Activated CD8-positive, alpha-beta T cell treated with anti-CD3 and anti-CD28 coated beads for 36 hours (primary cell): ENCODE measurements at regions of chr6 and their contacts with region 1.

Region 1: GRCh38 chr6:11366183-11366933 is 133.9 kb upstream of the NEDD9 start:
- DNase-seq: peak; percentile 77
- ATAC-seq: peak; percentile 74
- H3K4me3 Mint-ChIP-seq: peak overlapping the region; percentile 39
- H3K27ac Mint-ChIP-seq: peak overlapping the region; percentile 86
- H3K4me1 Mint-ChIP-seq: peaks cover 94% of the 10 kb centered on the region
- H3K27me3 Mint-ChIP-seq: no peaks in the 10 kb centered on the region
- CTCF ChIP-seq: peak; percentile 30

Region 2: DNA sequence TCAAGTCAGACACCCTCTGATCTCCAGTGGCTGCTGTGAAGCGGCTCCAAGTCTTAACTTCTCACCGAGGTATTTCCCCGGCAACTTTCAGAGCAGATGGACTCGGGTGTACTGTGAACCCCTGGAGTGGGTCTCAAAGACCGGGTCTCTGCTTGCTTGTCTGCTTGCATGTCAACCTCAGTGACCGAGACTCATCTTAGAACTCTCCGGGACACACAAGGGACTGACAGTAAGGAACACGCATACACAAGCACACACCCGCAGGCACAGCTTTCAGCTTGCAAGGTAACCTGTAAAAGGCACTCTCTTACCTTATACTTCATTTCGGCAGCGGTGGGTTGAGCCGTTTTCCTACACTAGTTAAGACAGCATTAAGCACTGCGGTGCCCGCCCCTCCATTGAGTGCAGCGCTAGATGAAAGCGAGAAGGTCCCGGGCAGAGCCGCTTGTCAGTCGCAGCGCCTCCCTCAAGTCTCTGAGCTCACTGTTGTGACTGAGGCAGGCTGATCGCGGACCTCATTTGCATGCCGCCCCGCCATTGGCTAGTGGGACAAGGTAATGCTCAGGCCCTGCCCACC is 134.1 kb before region 1 on chr6 and contains the start of gene NEDD9:
- CTCF ChIA-PET with region 1: no interaction called
- POLR2A ChIA-PET with region 1: no interaction called
- intact Hi-C with region 1: loop called (anchors 5 kb)
- DNase-seq: peak; percentile 98
- ATAC-seq: peak; percentile 96
- H3K4me3 Mint-ChIP-seq: peak within 1 kb of the TSS; percentile 84
- H3K27ac Mint-ChIP-seq: peak within 1 kb of the TSS; percentile 99
- H3K4me1 Mint-ChIP-seq: peaks cover 60% of the 10 kb centered on the region
- H3K27me3 Mint-ChIP-seq: no peaks in the 10 kb centered on the region
- CTCF ChIP-seq: no peak
- total RNA-seq, gene NEDD9: 26.6 to 29.7 TPM

Region 3: GRCh38 chr6:11353921-11354389 is 12.4 kb before region 1 on chr6:
- CTCF ChIA-PET with region 1: interaction called, 3 read pairs
- POLR2A ChIA-PET with region 1: interaction called, 16 read pairs
- intact Hi-C with region 1: no loop called
- DNase-seq: peak; percentile 95
- ATAC-seq: peak; percentile 91
- H3K4me3 Mint-ChIP-seq: peak overlapping the region; percentile 42
- H3K27ac Mint-ChIP-seq: peak overlapping the region; percentile 91
- H3K4me1 Mint-ChIP-seq: peaks cover 80% of the 10 kb centered on the region
- H3K27me3 Mint-ChIP-seq: no peaks in the 10 kb centered on the region
- CTCF ChIP-seq: no peak

Region 4: GRCh38 chr6:11414176-11414963 is 48.0 kb after region 1 on chr6:
- CTCF ChIA-PET with region 1: interaction called, 5 read pairs
- POLR2A ChIA-PET with region 1: no interaction called
- intact Hi-C with region 1: loop called (anchors 5 kb)
- DNase-seq: peak; percentile 61
- ATAC-seq: peak; percentile 25
- H3K4me3 Mint-ChIP-seq: no peak overlapping the region
- H3K27ac Mint-ChIP-seq: no peak overlapping the region
- H3K4me1 Mint-ChIP-seq: peaks cover 40% of the 10 kb centered on the region
- H3K27me3 Mint-ChIP-seq: no peaks in the 10 kb centered on the region
- CTCF ChIP-seq: no peak

Region 5: GRCh38 chr6:11854408-11855165 is 488.2 kb after region 1 on chr6:
- CTCF ChIA-PET with region 1: no interaction called
- POLR2A ChIA-PET with region 1: no interaction called
- intact Hi-C with region 1: no loop called
- DNase-seq: peak; percentile 17
- ATAC-seq: peak; percentile 80
- H3K4me3 Mint-ChIP-seq: no peak overlapping the region
- H3K27ac Mint-ChIP-seq: no peak overlapping the region
- H3K4me1 Mint-ChIP-seq: no peaks in the 10 kb centered on the region
- H3K27me3 Mint-ChIP-seq: no peaks in the 10 kb centered on the region
- CTCF ChIP-seq: no peak